ENCODE measurements at regions of chr1 and their contacts with region 1.

Region 1: GRCh38 chr1:38834937-38835827 is 24.4 kb downstream of the RRAGC start:
- DNase-seq: peak; percentile 64
- H3K4me3 ChIP-seq: no peak overlapping the region
- H3K27ac ChIP-seq: no peak overlapping the region
- H3K4me1 ChIP-seq: no peaks in the 10 kb centered on the region
- H3K27me3 ChIP-seq: no peaks in the 10 kb centered on the region
- CTCF ChIP-seq: peak; percentile 76

Region 2: DNA sequence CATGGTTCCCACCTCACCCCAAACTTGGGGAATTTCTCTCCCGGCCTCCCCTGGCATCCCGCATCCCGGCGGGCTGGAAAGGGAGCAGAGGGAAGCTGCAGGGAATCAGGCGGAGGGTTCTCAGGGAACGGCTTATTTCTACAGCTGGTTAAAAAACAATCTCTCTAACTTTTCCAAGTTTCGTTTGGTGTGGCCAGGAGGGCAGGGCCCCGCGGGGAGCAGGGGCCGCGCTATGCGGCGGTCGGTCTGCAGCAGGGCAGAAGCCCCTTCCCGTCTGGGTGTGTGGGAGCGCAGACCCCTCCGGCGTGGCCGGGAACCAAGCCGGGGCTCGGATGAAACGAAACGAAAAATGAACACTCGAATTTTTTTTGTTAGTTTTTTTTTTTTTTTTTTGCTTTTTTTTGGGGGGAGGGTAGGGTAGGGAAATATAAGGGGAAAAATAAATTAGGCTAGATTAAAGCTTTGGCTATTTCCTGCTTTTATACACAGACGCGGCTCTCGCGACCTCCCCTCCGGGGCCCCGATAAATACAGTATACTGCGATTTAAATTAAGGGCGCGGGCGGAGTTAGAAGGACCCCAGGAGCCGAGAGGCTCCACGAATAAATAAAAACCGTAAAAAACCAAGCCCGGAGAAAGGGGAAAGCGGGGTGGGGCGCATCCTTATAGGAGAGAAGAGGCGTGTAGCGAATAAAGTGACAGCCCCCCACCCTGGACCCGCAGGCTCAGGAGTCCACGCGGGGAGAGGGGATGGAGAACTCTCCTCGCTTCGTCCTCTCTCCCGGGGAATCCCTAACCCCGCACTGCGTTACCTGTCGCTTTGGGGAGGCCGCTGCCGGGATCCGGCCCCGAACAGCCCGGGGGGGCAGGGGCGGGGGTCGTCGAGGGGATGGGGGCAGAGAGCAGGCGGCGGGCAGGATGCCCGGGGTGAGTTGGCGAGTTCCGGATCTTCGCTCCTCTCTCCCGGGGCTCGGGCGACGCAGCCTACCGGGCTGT is 790.7 kb before region 1 on chr1:
- intact Hi-C with region 1: loop called (anchors 5 kb)
- DNase-seq: no peak
- H3K4me3 ChIP-seq: no peak overlapping the region
- H3K27ac ChIP-seq: no peak overlapping the region
- H3K4me1 ChIP-seq: no peaks in the 10 kb centered on the region
- H3K27me3 ChIP-seq: peaks cover 55% of the 10 kb centered on the region
- CTCF ChIP-seq: no peak

Region 3: DNA sequence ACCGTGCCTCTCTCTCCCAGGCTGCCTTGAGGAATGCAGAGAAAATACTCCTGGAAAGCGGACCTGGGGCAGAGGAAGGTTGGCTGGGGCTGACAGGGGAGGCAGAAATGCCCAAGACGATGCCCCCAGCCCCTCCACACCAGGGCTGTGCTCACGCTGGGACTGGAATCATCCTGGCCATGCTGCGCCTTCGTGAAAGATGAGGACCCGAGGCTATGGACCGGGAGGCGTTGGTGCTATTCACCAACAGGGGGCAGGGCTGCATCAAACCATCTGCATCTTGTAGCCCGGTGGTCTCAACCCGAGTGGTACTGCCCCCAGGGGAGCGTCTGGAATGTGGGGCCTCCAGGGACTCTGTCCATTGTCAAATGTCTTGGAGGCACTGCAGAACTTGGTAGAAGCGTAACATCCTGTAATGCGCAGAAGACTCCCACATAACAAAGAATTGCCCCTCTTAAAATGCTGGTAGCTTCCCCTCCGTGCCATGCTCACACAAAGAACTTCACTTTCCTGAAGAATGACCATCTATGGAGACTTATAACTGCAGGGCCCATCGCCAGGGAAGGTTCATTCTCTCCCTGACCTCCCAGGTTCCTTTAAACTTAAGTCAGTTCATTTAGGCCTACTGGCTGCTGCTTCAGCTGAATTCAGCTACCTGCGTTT is 226.8 kb before region 1 on chr1:
- intact Hi-C with region 1: loop called (anchors 5 kb)
- DNase-seq: no peak
- H3K4me3 ChIP-seq: no peak overlapping the region
- H3K27ac ChIP-seq: no peak overlapping the region
- H3K4me1 ChIP-seq: no peaks in the 10 kb centered on the region
- H3K27me3 ChIP-seq: no peaks in the 10 kb centered on the region
- CTCF ChIP-seq: peak; percentile 18

Region 4: GRCh38 chr1:38789498-38790169 is 45.5 kb before region 1 on chr1:
- intact Hi-C with region 1: no loop called
- DNase-seq: no peak
- H3K4me3 ChIP-seq: no peak overlapping the region
- H3K27ac ChIP-seq: no peak overlapping the region
- H3K4me1 ChIP-seq: no peaks in the 10 kb centered on the region
- H3K27me3 ChIP-seq: peaks cover 12% of the 10 kb centered on the region
- CTCF ChIP-seq: no peak

Region 5: GRCh38 chr1:38804062-38804886 is 30.9 kb before region 1 on chr1:
- intact Hi-C with region 1: no loop called
- DNase-seq: no peak
- H3K4me3 ChIP-seq: no peak overlapping the region
- H3K27ac ChIP-seq: no peak overlapping the region
- H3K4me1 ChIP-seq: no peaks in the 10 kb centered on the region
- H3K27me3 ChIP-seq: peaks cover 33% of the 10 kb centered on the region
- CTCF ChIP-seq: no peak

Measured in colonic mucosa (tissue), 4 donors.